ENCODE measurements at regions of chr9 and their contacts with region 1.

Region 1: GRCh38 chr9:17888066-17888465 is 309.2 kb downstream of the SH3GL2 start:
- DNase-seq: no peak
- H3K4me3 ChIP-seq: no peak overlapping the region
- H3K27ac ChIP-seq: no peak overlapping the region
- H3K4me1 ChIP-seq: no peaks in the 10 kb centered on the region
- H3K27me3 ChIP-seq: no peaks in the 10 kb centered on the region
- CTCF ChIP-seq: no peak

Region 2: GRCh38 chr9:19358701-19359100 is 1470.6 kb after region 1 on chr9:
- intact Hi-C with region 1: loop called (anchors 5 kb)
- DNase-seq: no peak
- H3K4me3 ChIP-seq: no peak overlapping the region
- H3K27ac ChIP-seq: no peak overlapping the region
- H3K4me1 ChIP-seq: no peaks in the 10 kb centered on the region
- H3K27me3 ChIP-seq: no peaks in the 10 kb centered on the region
- CTCF ChIP-seq: no peak

Measured in tibial artery (tissue), 4 donors.